MCF 10A (cell line): ENCODE measurements at regions of chr11 and their contacts with region 1.

Region 1: GRCh38 chr11:6298605-6299004 is 21.7 kb downstream of the CAVIN3 start:
- DNase-seq: peak; percentile 55
- H3K4me3 Mint-ChIP-seq: no peak overlapping the region
- H3K27ac Mint-ChIP-seq: no peak overlapping the region
- H3K4me1 Mint-ChIP-seq: no peaks in the 10 kb centered on the region
- H3K27me3 Mint-ChIP-seq: no peaks in the 10 kb centered on the region
- CTCF ChIP-seq: peak; percentile 54

Region 2: GRCh38 chr11:6022956-6023355 is 275.6 kb before region 1 on chr11:
- CTCF ChIA-PET with region 1: interaction called, 6 read pairs
- POLR2A ChIA-PET with region 1: interaction called, 3 read pairs
- intact Hi-C with region 1: loop called (anchors 1 kb)
- DNase-seq: peak; percentile 61
- H3K4me3 Mint-ChIP-seq: no peak overlapping the region
- H3K27ac Mint-ChIP-seq: no peak overlapping the region
- H3K4me1 Mint-ChIP-seq: no peaks in the 10 kb centered on the region
- H3K27me3 Mint-ChIP-seq: peaks cover 33% of the 10 kb centered on the region
- CTCF ChIP-seq: peak; percentile 56

Region 3: GRCh38 chr11:6285019-6285418 is 13.6 kb before region 1 on chr11:
- CTCF ChIA-PET with region 1: interaction called, 19 read pairs
- POLR2A ChIA-PET with region 1: no interaction called
- intact Hi-C with region 1: no loop called
- DNase-seq: no peak
- H3K4me3 Mint-ChIP-seq: no peak overlapping the region
- H3K27ac Mint-ChIP-seq: no peak overlapping the region
- H3K4me1 Mint-ChIP-seq: peaks cover 10% of the 10 kb centered on the region
- H3K27me3 Mint-ChIP-seq: peaks cover 11% of the 10 kb centered on the region
- CTCF ChIP-seq: no peak